ENCODE measurements at regions of chr14 and their contacts with region 1.

Region 1: GRCh38 chr14:22822571-22823098 is 7.1 kb upstream of the MRPL52 start:
- DNase-seq: peak; percentile 90
- H3K4me3 Mint-ChIP-seq: peak overlapping the region; percentile 71
- H3K27ac Mint-ChIP-seq: no peak overlapping the region
- H3K4me1 Mint-ChIP-seq: peaks cover 33% of the 10 kb centered on the region
- H3K27me3 Mint-ChIP-seq: peaks cover 9% of the 10 kb centered on the region

Region 2: DNA sequence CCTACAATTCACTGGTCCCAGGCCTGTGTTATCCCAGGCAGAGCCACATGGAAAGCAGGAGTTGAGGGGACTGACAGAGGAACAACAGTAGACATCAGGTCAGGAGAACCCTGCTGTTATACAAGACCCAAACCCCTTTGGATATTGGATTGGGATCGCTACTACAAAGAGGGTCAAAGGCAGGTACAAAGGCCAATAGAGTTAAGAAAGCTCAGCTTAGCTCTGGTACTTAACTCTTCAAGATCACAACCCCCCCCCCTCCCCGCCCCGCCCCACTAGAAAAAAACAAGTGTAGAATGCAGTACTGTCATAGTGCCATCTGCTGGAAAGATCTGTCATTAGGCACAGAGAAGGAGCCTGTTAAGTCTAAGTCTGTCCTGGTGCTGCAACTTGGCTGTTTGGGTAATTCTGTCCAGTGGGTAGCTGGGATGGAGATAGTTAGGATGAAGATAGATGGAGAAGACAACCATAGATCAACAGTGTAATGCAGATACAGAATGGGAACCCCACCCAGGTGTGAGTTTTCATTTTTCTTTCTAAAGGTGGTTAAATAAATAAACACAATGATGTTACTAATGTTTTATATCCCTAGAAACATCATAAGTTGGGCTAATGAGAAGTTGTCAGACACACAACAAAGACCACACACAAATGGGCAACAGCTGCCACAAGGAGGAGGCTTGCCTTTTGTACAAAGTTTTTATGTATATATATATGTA is 77.6 kb after region 1 on chr14:
- intact Hi-C with region 1: loop called (anchors 5 kb)
- DNase-seq: peak; percentile 87
- H3K4me3 Mint-ChIP-seq: no peak overlapping the region
- H3K27ac Mint-ChIP-seq: peak overlapping the region; percentile 1
- H3K4me1 Mint-ChIP-seq: peaks cover 14% of the 10 kb centered on the region
- H3K27me3 Mint-ChIP-seq: no peaks in the 10 kb centered on the region